Sciatic nerve (tissue), 2 donors: ENCODE measurements at regions of chr6 and their contacts with region 1.

Region 1: DNA sequence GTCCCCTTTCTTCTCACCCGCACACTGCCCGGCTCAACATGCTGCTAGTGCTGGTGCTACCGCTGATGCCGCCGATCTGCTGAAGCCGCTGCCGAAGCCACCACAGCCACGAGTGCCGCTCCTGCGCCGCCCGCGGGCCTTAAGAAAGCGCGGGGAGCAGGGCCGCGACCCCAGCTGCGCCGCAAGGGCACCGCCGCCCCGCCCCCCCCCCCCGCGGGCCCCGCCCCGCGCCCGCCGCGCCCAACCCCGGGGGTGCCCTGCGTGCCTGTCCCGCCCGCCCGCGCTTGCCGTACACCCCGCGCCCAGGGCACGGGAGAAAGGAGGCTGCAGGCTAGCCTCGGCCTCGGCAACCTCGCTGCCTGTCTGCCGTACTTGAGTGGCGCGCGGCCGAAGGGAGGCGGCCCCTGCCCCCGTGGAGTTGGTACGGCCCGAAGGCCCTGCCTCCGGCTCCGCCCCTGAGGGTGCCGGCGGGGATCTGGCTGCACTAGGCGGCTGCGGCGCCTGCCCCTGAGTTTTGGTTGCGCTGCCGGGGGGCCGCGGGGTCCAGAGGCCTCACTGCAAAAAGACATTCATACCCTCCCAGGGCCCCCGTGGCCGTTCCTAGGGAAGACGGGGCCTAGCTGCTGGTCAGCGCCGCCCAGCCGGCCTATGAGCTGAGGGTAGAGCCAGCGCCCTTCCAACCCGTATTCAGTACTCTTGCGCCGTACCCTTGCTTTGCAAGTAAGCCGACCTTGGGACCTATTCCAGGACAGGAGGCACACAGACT is at the start of gene SOD2:
- DNase-seq: peak; percentile 91
- ATAC-seq: peak; percentile 91
- total RNA-seq, gene SOD2: 370 TPM

Region 2: DNA sequence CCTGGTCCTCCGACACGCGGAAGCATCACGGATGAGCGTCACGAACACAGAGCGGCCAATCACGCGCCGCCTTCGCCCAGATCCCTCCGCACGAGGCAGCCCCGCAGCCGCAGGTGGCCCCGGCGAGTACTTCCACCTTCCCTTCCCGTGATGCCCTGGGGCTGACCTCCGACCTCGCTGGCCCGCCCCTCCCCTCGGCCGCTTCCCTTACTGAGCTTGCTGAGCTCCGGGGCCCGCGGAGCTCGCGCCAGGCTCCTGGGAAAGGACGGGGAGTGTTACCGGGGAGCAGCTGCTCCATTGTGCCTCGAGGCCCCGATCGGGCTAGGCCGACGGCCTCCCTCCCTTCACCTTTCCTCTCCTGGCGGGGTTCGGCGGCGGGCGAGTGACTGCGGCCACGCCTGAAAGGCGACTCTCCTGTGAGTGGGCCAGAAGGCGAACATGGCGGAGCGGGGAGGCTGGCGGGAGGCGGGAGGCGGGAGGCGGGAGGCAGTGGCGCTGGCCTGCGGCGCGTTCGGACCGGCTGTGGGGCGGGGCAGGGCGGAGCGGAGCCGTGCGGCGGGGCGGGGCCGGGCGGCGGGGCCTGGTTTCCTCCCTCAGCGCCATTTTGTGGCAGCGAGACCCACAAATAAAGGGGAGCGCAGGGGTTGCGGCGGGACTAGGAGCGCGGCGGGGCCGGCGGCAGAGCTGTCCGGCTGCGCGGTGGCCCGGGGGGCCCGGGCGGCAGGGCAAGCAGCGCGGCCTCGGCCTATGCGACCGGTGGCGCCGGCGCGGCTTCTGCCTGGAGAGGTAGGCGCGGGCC is 33.8 kb after region 1 on chr6 and contains the start of gene WTAP:
- intact Hi-C with region 1: loop called (anchors 2 kb)
- DNase-seq: peak; percentile 97
- ATAC-seq: peak; percentile 97
- total RNA-seq, gene WTAP: 88.0 TPM

Region 3: DNA sequence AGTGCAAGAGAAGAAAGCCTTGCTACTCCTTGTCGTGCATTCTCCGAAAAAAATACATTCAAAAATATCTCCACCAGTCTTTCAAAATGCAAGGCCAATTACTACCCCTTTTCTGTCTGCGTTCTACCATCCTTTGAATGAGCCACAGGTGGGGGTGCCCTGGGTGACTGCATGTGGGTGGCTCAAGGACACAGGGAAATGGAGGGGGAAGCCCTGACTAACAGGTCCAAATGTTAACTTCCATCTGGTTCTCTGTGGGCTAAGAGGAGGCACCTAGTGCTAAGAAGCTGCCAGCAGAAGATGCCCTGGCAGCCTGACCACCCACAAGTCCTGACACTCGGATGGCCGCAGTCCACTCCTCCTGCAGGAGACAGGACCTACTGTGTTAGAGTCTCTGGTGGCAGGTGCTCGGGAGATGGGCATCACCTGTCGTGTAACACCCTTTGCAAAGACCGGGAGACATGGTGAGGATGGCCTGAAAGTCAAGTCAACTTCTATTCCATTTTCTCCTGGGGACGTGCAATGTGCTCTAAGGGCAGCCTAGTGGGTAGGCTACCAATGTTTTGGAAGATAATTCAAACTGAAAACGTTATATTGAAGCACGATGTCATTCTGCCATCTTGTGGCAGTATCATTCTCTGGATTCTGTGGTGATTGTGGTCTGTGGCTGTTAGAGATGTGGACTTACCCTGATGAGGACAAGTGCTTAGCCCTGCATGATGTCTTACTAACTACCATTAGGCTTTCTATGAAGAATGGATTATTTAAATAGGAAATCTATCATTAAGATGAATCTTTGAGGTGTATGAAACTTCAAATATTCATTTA is 248.2 kb after region 1 on chr6:
- intact Hi-C with region 1: no loop called
- DNase-seq: no peak
- ATAC-seq: peak; percentile 47